Right ventricle myocardium superior (tissue), 1 donor: ENCODE measurements at regions of chr1 and their contacts with region 1.

Region 1: GRCh38 chr1:156476501-156477298 is 23.9 kb downstream of the MEF2D start:
- DNase-seq: no peak
- ATAC-seq: peak; percentile 1

Region 2: GRCh38 chr1:155931332-155932038 is 545.2 kb before region 1 on chr1:
- intact Hi-C with region 1: no loop called
- DNase-seq: peak; percentile 10
- ATAC-seq: no peak

Region 3: GRCh38 chr1:156591432-156592157 is 114.9 kb after region 1 on chr1 and contains the start of gene NAXE:
- intact Hi-C with region 1: loop called (anchors 10 kb)
- DNase-seq: peak; percentile 86
- ATAC-seq: peak; percentile 98
- total RNA-seq, gene NAXE: 115 TPM